Panc1 (cell line): ENCODE measurements at regions of chr19 and their contacts with region 1.

Region 1: GRCh38 chr19:39341719-39342604 is at the start of gene SAMD4B:
- DNase-seq: peak; percentile 100
- ATAC-seq: peak; percentile 94
- H3K4me3 ChIP-seq: peak within 1 kb of the TSS; percentile 39 to 60
- H3K27ac ChIP-seq: peak within 1 kb of the TSS; percentile 88
- H3K4me1 ChIP-seq: peaks cover 40% of the 10 kb centered on the region
- H3K27me3 ChIP-seq: no peaks in the 10 kb centered on the region
- CTCF ChIP-seq: no peak
- total RNA-seq, gene SAMD4B: 1,339 TPM

Region 2: DNA sequence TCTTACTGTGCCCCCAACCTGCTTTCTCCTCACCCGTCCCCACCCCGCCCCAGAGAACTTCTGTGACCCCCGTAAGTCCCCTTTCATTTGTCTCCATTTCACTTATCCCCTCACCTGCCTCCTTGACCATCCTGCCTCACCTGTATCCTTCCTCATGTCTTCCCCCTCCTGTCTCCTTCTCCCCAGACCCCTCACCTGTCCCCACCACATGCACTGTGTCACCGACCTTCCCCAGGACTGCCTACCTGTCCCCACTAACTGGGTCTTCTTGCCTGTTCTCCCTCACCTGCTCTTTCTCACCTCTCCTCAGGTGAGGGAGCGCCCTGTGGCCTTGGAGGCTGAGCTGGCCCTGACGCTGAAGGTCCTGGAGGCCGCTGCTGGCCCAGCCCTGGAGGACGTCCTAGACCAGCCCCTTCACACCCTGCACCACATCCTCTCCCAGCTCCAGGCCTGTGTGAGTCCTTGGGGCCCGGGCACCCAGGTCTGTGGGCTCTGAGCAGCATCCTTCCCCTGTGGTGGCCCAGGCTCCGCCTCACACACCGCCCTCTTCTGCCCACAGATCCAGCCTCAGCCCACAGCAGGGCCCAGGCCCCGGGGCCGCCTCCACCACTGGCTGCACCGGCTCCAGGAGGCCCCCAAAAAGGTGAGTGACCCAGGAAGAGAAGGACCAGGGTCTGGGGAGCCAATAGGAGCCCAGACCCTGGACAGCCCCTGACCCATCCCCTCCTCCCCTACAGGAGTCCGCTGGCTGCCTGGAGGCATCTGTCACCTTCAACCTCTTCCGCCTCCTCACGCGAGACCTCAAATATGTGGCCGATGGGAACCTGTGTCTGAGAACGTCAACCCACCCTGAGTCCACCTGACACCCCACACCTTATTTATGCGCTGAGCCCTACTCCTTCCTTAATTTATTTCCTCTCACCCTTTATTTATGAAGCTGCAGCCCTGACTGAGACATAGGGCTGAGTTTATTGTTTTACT is 44.0 kb before region 1 on chr19:
- CTCF ChIA-PET with region 1: interaction called, 6 read pairs
- POLR2A ChIA-PET with region 1: interaction called, 19 read pairs
- in situ Hi-C with region 1: loop called (anchors 10 kb)
- intact Hi-C with region 1: no loop called
- DNase-seq: no peak
- ATAC-seq: peak; percentile 49
- H3K4me3 ChIP-seq: no peak overlapping the region
- H3K27ac ChIP-seq: no peak overlapping the region
- H3K4me1 ChIP-seq: no peaks in the 10 kb centered on the region; the same call in 1 of the 2 replicates
- H3K27me3 ChIP-seq: peaks cover 15% of the 10 kb centered on the region
- CTCF ChIP-seq: no peak

Region 3: DNA sequence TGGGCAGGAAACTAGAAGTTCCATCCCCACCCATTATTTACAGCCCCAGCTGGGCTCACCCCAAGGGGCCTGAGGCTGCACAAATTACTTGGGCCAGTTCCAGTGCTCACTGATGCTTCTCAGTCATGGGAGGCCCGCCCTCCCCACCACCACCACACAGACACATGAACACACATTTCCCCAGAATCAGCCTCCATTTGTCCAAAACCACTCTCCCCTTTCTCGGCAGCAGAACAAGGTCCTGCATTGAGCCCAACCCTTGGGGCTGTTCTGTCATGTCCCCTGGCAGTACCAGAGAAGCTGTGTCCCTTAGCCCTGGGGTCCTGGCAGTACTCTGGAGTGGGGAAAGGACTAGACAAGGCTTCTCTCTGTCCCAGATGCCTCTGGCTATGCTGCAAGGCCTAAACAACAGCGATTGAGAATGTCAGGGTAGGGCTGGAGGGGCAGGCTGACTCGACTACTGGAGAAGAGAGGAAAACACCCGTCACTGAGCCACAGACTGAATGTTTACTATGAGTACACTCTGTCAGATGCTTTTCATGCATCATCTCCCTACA is 22.0 kb after region 1 on chr19:
- CTCF ChIA-PET with region 1: interaction called, 19 read pairs
- POLR2A ChIA-PET with region 1: interaction called, 12 read pairs
- in situ Hi-C with region 1: no loop called
- intact Hi-C with region 1: no loop called
- DNase-seq: no peak
- ATAC-seq: peak; percentile 1; the same call in 1 of the 2 replicates
- H3K4me3 ChIP-seq: no peak overlapping the region
- H3K27ac ChIP-seq: no peak overlapping the region
- H3K4me1 ChIP-seq: peaks cover 5% of the 10 kb centered on the region; the same call in 1 of the 2 replicates
- H3K27me3 ChIP-seq: no peaks in the 10 kb centered on the region
- CTCF ChIP-seq: no peak

Region 4: GRCh38 chr19:39390755-39391592 is 49.0 kb after region 1 on chr19 and contains the starts of genes MED29 and PAF1:
- CTCF ChIA-PET with region 1: interaction called, 11 read pairs
- POLR2A ChIA-PET with region 1: interaction called, 14 read pairs
- in situ Hi-C with region 1: no loop called
- intact Hi-C with region 1: loop called (anchors 1 kb)
- DNase-seq: peak; percentile 100
- ATAC-seq: peak; percentile 96
- H3K4me3 ChIP-seq: peak within 1 kb of the TSS; percentile 39 to 51
- H3K27ac ChIP-seq: peak within 1 kb of the TSS; percentile 86
- H3K4me1 ChIP-seq: peaks cover 24% of the 10 kb centered on the region
- H3K27me3 ChIP-seq: no peaks in the 10 kb centered on the region
- CTCF ChIP-seq: no peak
- total RNA-seq, gene MED29: 739 TPM
- total RNA-seq, gene PAF1: 901 TPM

Region 5: GRCh38 chr19:39412100-39412866 is 70.3 kb after region 1 on chr19 and contains the start of gene PLEKHG2:
- CTCF ChIA-PET with region 1: interaction called, 18 read pairs
- POLR2A ChIA-PET with region 1: interaction called, 57 read pairs
- in situ Hi-C with region 1: no loop called
- intact Hi-C with region 1: loop called (anchors 1 kb)
- DNase-seq: peak; percentile 100
- ATAC-seq: peak; percentile 67
- H3K4me3 ChIP-seq: peak within 1 kb of the TSS; percentile 42 to 55
- H3K27ac ChIP-seq: peak within 1 kb of the TSS; percentile 92
- H3K4me1 ChIP-seq: peaks cover 58% of the 10 kb centered on the region
- H3K27me3 ChIP-seq: no peaks in the 10 kb centered on the region
- CTCF ChIP-seq: no peak
- total RNA-seq, gene PLEKHG2: 1,988 TPM

Region 6: DNA sequence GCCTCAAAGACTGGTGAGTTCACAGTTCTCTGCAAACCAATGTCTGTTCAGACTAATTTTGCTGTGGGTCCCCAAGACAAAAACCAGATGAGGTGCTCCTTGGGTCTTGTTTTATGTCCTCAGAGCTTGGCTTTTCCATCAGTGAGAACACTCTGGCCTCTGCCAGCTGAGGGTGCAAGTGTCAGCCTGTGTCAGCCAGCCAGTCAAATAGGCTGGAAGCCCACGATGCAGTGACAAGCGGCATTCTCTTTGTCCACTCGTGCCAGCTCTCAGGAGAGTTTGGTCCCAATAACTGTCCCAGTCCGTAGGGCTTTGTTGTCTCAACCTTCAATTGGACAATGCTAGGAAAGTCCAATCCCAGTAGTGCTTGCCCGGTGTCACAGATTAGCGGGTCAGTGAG is 952.6 kb after region 1 on chr19:
- CTCF ChIA-PET with region 1: interaction called, 10 read pairs
- POLR2A ChIA-PET with region 1: no interaction called
- in situ Hi-C with region 1: no loop called
- intact Hi-C with region 1: no loop called
- DNase-seq: no peak
- ATAC-seq: peak; percentile 4
- H3K4me3 ChIP-seq: no peak overlapping the region
- H3K27ac ChIP-seq: no peak overlapping the region
- H3K4me1 ChIP-seq: no peaks in the 10 kb centered on the region
- H3K27me3 ChIP-seq: peaks cover 4% of the 10 kb centered on the region; the same call in 1 of the 2 replicates
- CTCF ChIP-seq: no peak